Naive thymus-derived CD4-positive, alpha-beta T cell (primary cell): ENCODE measurements at regions of chr9 and their contacts with region 1.

Region 1: DNA sequence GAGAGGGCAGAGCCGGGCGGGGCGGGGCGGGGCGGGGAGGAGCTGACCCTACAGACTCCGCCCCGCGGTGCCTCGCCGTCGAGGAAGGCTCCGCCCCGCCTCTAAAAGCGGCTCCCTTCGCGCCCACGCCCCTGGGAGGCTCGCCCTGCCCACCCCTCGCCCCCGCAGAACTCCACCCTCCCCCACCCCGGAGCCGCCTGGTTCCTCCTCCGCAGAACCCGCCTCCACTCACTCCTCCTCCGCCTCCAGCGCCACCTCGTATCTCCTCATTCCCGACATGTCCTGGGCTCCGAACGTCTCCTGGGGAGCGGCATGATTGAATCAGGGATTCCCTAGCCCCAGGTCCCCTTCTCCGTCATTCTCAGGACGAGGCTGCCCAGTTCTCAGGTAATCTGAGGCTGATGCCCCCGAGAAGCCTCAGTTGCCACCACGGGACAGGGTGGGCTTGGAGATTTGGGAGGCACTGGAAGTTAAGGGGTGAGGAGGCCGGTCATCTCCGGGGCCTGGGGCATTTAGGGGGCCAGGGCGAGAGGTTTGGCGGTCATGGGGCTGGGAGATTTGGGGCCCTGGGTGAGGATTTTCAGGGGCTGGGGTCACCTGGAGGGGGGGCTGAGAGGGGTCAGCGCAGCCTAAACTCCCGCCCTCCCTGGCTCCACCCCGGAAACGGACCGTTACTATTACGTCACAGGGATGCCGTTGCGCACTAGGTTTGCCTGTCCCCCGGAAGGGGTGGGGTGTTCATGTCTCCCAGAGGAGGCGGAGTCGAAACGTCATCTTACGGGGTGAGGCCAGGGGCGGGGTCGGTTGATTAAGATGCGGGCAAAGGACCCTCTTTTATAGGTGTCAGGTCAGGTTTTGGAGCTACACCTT is 3.2 kb upstream of the CCL27 start:
- DNase-seq: peak; percentile 74 to 90 (median 84)
- ATAC-seq: peak; percentile 90
- H3K4me3 ChIP-seq: peak overlapping the region; percentile 99
- H3K4me3 Mint-ChIP-seq: peak overlapping the region; percentile 89 to 97 (median 94)
- H3K27ac ChIP-seq: peak overlapping the region; percentile 98
- H3K27ac Mint-ChIP-seq: peak overlapping the region; percentile 86 to 98 (median 97)
- H3K4me1 ChIP-seq: peaks cover 33 to 40% of the 10 kb centered on the region in 2 donors
- H3K4me1 Mint-ChIP-seq: peaks cover 37 to 58% (median 50%) of the 10 kb centered on the region in 7 donors
- H3K27me3 ChIP-seq: no peaks in the 10 kb centered on the region
- H3K27me3 Mint-ChIP-seq: no peaks in the 10 kb centered on the region

Region 2: GRCh38 chr9:34048923-34049697 is 616.5 kb before region 1 on chr9:
- CTCF ChIA-PET with region 1: no interaction called
- POLR2A ChIA-PET with region 1: no interaction called
- intact Hi-C with region 1: loop called (anchors 2 to 5 kb)
- DNase-seq: peak; percentile 96 to 99 (median 97)
- ATAC-seq: peak; percentile 93
- H3K4me3 ChIP-seq: peak overlapping the region; percentile 98
- H3K4me3 Mint-ChIP-seq: peak overlapping the region; percentile 96 to 100 (median 98)
- H3K27ac ChIP-seq: peak overlapping the region; percentile 86
- H3K27ac Mint-ChIP-seq: peak overlapping the region; percentile 98 to 100 (median 99)
- H3K4me1 ChIP-seq: peaks cover 11 to 22% of the 10 kb centered on the region in 2 donors
- H3K4me1 Mint-ChIP-seq: peaks cover 25 to 55% (median 31%) of the 10 kb centered on the region in 7 donors
- H3K27me3 ChIP-seq: no peaks in the 10 kb centered on the region
- H3K27me3 Mint-ChIP-seq: peaks cover 0 to 4% (median 0%) of the 10 kb centered on the region in 5 donors

Region 3: DNA sequence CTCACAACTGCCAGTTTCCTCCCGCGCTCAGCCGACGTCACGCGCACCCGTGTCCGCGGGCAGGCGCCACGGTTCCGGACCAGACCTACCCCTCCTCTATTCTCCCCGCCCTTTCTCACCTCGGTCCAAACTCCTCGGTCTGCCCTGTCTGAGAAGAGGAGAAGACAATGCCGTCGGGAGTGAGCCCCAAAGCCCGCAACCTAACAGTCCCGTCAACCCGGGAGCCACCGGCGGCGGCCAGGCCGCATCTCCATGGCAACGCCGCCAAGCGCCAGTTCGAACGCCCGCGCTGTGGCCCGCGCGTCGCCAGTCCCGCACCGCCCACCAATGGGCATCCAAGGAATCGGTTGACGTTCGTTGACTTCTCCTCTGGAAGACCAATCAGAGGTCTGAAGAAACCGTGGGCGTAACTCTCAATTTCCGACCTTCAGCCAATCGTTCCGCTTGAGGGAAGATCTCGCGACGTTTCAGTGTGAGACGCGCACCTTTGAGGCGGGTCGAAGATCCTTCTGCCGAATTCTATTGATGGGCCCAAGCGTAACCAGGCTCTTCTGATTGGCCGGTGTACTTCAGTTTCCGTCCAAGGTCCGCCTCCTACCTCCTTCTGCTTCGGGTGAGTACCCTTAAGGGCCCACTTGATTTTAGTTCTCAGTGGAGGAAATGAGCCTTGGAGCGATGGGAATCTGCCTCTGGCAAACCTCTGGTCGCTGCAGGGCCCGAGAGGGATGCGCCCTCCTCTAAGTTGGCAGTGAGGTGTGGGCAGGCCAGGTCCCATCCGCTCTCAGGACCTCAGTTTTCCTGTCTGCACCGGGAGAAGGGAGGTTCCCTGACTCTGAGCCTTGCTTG is 336.4 kb before region 1 on chr9 and contains the starts of genes KIF24 and NUDT2:
- CTCF ChIA-PET with region 1: no interaction called
- POLR2A ChIA-PET with region 1: no interaction called
- intact Hi-C with region 1: loop called in 1 of 2 experiments (anchors 1 kb)
- DNase-seq: peak; percentile 89 to 99 (median 96)
- ATAC-seq: peak; percentile 95
- H3K4me3 ChIP-seq: peak within 1 kb of the TSS; percentile 98
- H3K4me3 Mint-ChIP-seq: peak within 1 kb of the TSS; percentile 88 to 97 (median 94)
- H3K27ac ChIP-seq: peak within 1 kb of the TSS; percentile 94
- H3K27ac Mint-ChIP-seq: peak within 1 kb of the TSS; percentile 77 to 98 (median 95)
- H3K4me1 ChIP-seq: peaks cover 3 to 8% of the 10 kb centered on the region in 2 donors
- H3K4me1 Mint-ChIP-seq: peaks cover 11 to 45% (median 29%) of the 10 kb centered on the region in 7 donors
- H3K27me3 ChIP-seq: no peaks in the 10 kb centered on the region
- H3K27me3 Mint-ChIP-seq: no peaks in the 10 kb centered on the region
- total RNA-seq, gene KIF24: 0.11 to 6.0 (median 0.35) TPM
- total RNA-seq, gene NUDT2: 7.5 to 30.0 (median 22.7) TPM

Region 4: DNA sequence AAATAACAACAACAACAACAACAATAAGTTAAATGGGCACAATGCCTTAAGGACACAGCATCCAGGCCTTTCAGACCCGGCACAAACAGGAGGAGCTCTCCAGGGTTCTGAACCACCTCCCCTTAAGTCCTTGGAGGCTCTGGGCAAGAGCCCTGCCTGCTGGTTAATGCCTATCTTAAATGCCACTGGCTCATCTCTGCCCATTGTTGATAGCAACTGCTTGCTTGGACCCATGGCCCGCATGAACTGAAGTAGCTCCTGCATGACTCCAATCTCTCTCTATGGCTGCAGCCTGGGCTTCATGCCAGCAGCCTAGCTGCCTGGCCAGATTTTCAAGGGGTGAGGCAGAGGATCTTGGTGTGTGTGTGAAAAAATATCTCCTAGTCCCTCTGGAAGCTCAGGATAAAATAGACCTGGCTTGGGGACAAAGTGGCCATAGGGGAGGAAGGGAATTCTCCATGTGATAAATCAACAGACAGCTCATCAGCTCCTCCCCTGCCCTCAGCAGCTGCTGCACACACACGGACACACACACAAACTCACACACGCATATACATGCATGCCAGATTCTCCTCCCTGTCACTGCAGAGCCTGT is 234.7 kb before region 1 on chr9:
- CTCF ChIA-PET with region 1: no interaction called
- POLR2A ChIA-PET with region 1: no interaction called
- intact Hi-C with region 1: no loop called
- DNase-seq: peak in 1 of 9 donors; percentile 25
- ATAC-seq: no peak
- H3K4me3 ChIP-seq: no peak overlapping the region
- H3K4me3 Mint-ChIP-seq: no peak overlapping the region
- H3K27ac ChIP-seq: no peak overlapping the region
- H3K27ac Mint-ChIP-seq: peak overlapping the region in 1 of 9 donors; percentile 68
- H3K4me1 ChIP-seq: no peaks in the 10 kb centered on the region
- H3K4me1 Mint-ChIP-seq: peaks cover 0 to 6% (median 0%) of the 10 kb centered on the region in 7 donors
- H3K27me3 ChIP-seq: no peaks in the 10 kb centered on the region
- H3K27me3 Mint-ChIP-seq: no peaks in the 10 kb centered on the region

Region 5: GRCh38 chr9:34522971-34523797 is 142.4 kb before region 1 on chr9 and contains the start of gene ENHO:
- CTCF ChIA-PET with region 1: no interaction called
- POLR2A ChIA-PET with region 1: no interaction called
- intact Hi-C with region 1: loop called in 1 of 2 experiments (anchors 1 kb)
- DNase-seq: peak; percentile 77 to 97 (median 91)
- ATAC-seq: peak; percentile 97
- H3K4me3 ChIP-seq: peak within 1 kb of the TSS; percentile 66
- H3K4me3 Mint-ChIP-seq: peak within 1 kb of the TSS; percentile 70 to 83 (median 78)
- H3K27ac ChIP-seq: peak within 1 kb of the TSS; percentile 61
- H3K27ac Mint-ChIP-seq: peak within 1 kb of the TSS in 7 of 9 donors; percentile 18 to 79 (median 61)
- H3K4me1 ChIP-seq: peaks cover 7 to 10% of the 10 kb centered on the region in 2 donors
- H3K4me1 Mint-ChIP-seq: peaks cover 5 to 19% (median 10%) of the 10 kb centered on the region in 7 donors
- H3K27me3 ChIP-seq: no peaks in the 10 kb centered on the region
- H3K27me3 Mint-ChIP-seq: peaks cover 0 to 55% (median 8%) of the 10 kb centered on the region in 5 donors
- total RNA-seq, gene ENHO: 0.56 to 1.9 TPM in 2 of 5 experiments, not detected in the others

Region 6: GRCh38 chr9:34589636-34590380 is 75.8 kb before region 1 on chr9 and contains the start of gene CNTFR:
- CTCF ChIA-PET with region 1: no interaction called
- POLR2A ChIA-PET with region 1: no interaction called
- intact Hi-C with region 1: no loop called
- DNase-seq: peak in 2 of 9 donors; percentile 16 to 20
- ATAC-seq: peak; percentile 11
- H3K4me3 ChIP-seq: peak within 1 kb of the TSS; percentile 71
- H3K4me3 Mint-ChIP-seq: peak within 1 kb of the TSS; percentile 52 to 91 (median 82)
- H3K27ac ChIP-seq: no peak within 1 kb of the TSS
- H3K27ac Mint-ChIP-seq: peak within 1 kb of the TSS in 1 of 9 donors; percentile 2
- H3K4me1 ChIP-seq: peaks cover 0 to 13% of the 10 kb centered on the region in 2 donors
- H3K4me1 Mint-ChIP-seq: peaks cover 10 to 31% (median 28%) of the 10 kb centered on the region in 7 donors
- H3K27me3 ChIP-seq: peaks cover 4 to 20% of the 10 kb centered on the region in 2 donors
- H3K27me3 Mint-ChIP-seq: peaks cover 64 to 85% (median 71%) of the 10 kb centered on the region in 5 donors
- total RNA-seq, gene CNTFR: not detected

Region 7: GRCh38 chr9:34646211-34647083 is 19.2 kb before region 1 on chr9 and contains the start of gene GALT:
- CTCF ChIA-PET with region 1: interaction called, 50 read pairs
- POLR2A ChIA-PET with region 1: interaction called, 79 read pairs
- intact Hi-C with region 1: loop called (anchors 1 kb)
- DNase-seq: peak; percentile 82 to 98 (median 93)
- ATAC-seq: peak; percentile 96
- H3K4me3 ChIP-seq: peak within 1 kb of the TSS; percentile 90
- H3K4me3 Mint-ChIP-seq: peak within 1 kb of the TSS; percentile 82 to 96 (median 92)
- H3K27ac ChIP-seq: peak within 1 kb of the TSS; percentile 87
- H3K27ac Mint-ChIP-seq: peak within 1 kb of the TSS; percentile 86 to 94 (median 90)
- H3K4me1 ChIP-seq: peaks cover 20 to 23% of the 10 kb centered on the region in 2 donors
- H3K4me1 Mint-ChIP-seq: peaks cover 18 to 48% (median 34%) of the 10 kb centered on the region in 7 donors
- H3K27me3 ChIP-seq: no peaks in the 10 kb centered on the region
- H3K27me3 Mint-ChIP-seq: no peaks in the 10 kb centered on the region
- total RNA-seq, gene GALT: 126 to 217 (median 162) TPM

Region 8: GRCh38 chr9:35071814-35072460 is 406.3 kb after region 1 on chr9:
- CTCF ChIA-PET with region 1: no interaction called
- POLR2A ChIA-PET with region 1: no interaction called
- intact Hi-C with region 1: loop called in 1 of 2 experiments (anchors 10 kb)
- DNase-seq: peak in 8 of 9 donors; percentile 67 to 83 (median 71)
- ATAC-seq: peak; percentile 70
- H3K4me3 ChIP-seq: peak overlapping the region; percentile 53
- H3K4me3 Mint-ChIP-seq: peak overlapping the region; percentile 74 to 95 (median 88)
- H3K27ac ChIP-seq: peak overlapping the region; percentile 93
- H3K27ac Mint-ChIP-seq: peak overlapping the region; percentile 81 to 96 (median 91)
- H3K4me1 ChIP-seq: peaks cover 22 to 43% of the 10 kb centered on the region in 2 donors
- H3K4me1 Mint-ChIP-seq: peaks cover 34 to 66% (median 53%) of the 10 kb centered on the region in 7 donors
- H3K27me3 ChIP-seq: no peaks in the 10 kb centered on the region
- H3K27me3 Mint-ChIP-seq: peaks cover 0 to 3% (median 0%) of the 10 kb centered on the region in 5 donors

Region 9: DNA sequence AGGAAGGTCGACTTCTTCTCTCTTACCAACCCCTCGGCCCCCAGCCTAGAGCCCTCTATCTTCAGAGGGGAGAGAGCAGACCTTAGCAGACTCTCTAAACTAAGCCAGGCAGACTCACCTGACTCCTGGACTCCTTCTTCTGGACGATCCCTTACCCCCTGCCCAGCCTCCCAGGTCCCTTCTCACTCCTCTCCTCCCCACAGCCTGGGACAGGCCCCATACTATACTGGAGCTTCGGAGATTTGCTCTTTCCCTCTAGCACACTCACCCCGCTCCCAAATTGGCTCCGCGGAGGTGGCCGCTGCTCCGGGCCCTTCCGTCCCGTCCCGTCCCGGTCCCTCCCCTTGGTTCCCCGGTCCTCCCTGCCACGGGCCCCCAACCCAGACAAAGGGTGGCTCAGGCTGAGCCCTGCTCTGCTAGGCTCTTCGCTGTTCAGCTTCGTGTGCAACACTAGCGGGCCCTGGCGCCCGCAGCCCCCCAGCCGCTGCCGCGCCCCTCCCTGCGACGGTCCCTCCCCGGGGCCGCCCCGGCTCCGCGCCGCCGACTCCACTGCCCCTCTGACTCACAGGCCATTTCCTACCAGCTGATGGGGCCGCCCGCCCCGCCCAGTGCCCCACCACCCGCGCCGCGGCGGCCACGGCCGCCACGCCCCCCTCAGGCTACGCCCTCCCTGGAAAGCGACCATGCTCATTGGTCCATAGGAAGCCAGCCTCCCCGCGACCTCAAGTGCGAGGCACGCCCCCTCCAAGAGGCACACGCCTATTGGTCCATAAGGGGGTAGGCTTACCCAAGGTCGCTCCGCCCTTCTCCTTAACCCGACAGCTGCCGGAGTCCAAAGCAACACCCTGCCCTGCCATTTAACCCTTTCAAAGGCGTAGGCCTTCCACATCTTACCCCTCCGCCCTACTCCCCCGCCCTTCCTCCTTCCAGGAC is 445.7 kb after region 1 on chr9:
- CTCF ChIA-PET with region 1: no interaction called
- POLR2A ChIA-PET with region 1: no interaction called
- intact Hi-C with region 1: loop called (anchors 2 to 5 kb)
- DNase-seq: peak; percentile 77 to 96 (median 91)
- ATAC-seq: peak; percentile 86
- H3K4me3 ChIP-seq: peak overlapping the region; percentile 69
- H3K4me3 Mint-ChIP-seq: peak overlapping the region; percentile 55 to 87 (median 80)
- H3K27ac ChIP-seq: peak overlapping the region; percentile 71
- H3K27ac Mint-ChIP-seq: peak overlapping the region; percentile 62 to 94 (median 85)
- H3K4me1 ChIP-seq: peaks cover 36 to 37% of the 10 kb centered on the region in 2 donors
- H3K4me1 Mint-ChIP-seq: peaks cover 29 to 63% (median 58%) of the 10 kb centered on the region in 7 donors
- H3K27me3 ChIP-seq: no peaks in the 10 kb centered on the region
- H3K27me3 Mint-ChIP-seq: no peaks in the 10 kb centered on the region